Left cardiac atrium (tissue), 4 donors: ENCODE measurements at regions of chr16 and their contacts with region 1.

Region 1: GRCh38 chr16:81035398-81035974 is at the start of gene ATMIN:
- DNase-seq: peak; percentile 89
- ATAC-seq: peak; percentile 96 to 97
- total RNA-seq, gene ATMIN: 19.4 to 21.3 TPM

Region 2: DNA sequence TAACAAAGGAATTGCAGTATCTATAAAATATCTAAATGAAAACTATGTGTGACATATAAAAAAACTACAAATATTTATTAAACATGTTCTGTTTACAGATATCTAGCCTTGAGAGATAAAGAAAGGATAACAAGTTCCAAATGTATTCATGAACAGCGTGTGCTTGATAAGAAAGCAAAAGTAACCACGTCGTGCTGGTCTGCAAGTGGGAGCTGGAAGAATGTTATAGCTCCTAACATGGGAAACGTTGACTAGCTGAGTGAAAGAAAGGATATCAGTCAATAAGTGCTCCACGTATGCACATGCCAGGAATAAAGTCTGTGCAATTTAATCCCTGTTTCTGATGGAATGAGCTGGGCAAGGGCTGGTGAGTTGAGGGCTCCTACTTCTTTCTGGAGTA is 159.9 kb before region 1 on chr16:
- intact Hi-C with region 1: no loop called
- DNase-seq: no peak
- ATAC-seq: no peak

Region 3: DNA sequence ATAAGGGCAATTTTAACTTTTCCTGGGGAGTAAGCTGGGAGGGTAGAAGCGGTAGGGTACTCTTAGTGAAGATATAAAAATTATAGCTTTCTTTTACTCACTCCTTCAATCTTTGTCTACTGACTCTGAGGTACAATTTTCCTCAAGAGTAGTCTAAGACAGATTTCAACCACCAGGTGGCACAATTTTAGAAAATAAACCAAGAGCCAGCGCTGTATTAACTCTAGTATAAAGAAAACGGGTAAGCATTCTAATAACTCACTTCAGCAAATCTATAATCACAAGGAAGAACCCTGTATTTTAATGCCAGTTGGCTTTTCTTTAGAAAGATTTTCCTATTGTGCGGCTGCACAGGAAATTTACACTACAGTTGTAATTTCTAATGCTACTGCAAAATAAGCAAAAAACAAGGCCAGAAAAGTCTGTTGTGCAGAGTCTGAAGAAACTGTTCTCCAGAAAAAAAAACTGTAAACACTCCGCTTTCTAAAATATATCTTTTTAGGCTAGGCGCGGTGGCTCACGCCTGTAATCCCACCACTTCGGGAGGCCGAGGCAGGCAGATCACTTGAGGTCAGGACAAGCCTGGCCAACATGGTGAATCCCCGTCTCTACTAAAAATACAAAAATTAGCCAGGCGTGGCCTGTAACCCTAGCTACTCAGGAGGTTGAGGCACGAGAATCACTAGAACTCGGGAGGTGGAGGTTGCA is 30.7 kb before region 1 on chr16:
- intact Hi-C with region 1: no loop called
- DNase-seq: no peak
- ATAC-seq: no peak

Region 4: DNA sequence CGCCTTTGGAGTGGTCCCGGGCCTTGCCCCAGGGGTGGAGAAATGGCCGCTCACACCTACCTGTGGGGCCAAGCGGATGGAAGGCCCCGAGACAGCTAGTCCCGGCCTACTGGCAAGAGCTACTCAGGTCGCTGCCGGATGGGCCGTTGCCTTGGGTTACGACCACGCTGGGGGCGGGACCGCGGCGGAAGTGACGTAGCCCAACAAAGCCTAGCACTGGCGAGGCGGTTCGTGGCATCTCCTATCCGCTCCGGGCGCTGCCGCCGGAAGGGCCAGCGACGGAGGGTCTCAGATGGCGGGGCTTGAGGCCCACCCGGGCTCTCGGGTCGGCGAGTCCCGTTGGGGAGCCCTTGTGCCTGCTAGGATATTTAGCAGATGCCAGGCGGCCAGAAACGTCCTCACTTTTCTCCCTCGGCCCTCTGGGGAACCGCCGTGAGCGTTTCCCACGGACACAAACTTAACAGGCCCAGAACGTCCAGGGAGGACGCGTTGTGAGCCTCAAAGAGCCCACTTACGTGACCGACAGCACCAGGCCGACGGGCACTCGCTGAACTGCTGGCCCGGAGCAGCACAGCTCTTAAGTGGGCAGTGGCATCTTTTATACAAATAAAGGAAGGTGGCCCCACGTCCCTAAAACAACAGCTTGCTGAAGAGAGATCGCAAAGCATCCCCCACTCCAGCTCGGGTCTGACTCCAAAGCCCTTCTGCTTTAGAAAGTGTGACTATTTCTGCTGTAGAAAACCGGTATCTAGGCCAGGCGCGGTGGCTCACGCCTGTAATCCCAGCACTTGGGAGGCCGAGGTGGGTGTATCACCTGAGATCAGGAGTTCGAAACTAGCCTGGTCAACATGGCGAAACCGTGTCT is 41.8 kb after region 1 on chr16 and contains the start of gene C16orf46:
- intact Hi-C with region 1: no loop called
- DNase-seq: peak; percentile 97
- ATAC-seq: peak; percentile 98 to 99
- total RNA-seq, gene C16orf46: 0.27 to 0.34 TPM

Region 5: DNA sequence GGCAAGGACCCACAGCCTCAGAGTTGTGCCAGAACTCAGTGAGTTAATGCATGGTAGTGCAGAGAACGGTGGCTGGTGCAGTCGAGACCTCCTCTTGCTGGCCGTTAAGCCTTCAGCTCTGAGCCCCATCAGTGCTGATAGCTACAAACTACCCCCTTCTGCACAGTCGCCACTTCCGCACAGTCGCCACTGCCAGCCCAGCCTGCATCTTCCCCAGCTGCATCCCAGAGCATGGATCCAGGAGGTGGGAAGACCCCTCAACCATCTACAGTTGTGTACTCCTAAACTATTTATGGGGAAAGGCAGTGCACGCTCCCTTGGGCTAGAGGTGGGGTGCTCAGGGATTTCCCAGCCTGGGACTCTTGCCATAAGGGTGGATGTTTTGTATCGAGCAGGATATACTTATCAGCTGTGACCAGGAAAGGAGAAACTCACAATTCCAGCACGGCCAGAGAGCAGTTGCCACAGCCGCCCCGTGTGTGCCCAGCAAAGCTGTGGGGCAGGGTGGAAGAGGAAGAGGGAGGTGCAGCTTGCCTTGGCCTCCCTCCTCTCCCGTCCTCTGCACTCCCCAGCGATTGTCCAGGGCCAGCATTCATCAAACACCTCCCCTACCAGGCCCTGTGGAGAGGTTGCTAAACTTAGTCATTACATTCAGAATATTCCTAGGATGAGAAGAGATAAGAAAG is 359.6 kb after region 1 on chr16:
- intact Hi-C with region 1: loop called in 1 of 2 experiments (anchors 10 kb)
- DNase-seq: peak; percentile 75
- ATAC-seq: peak; percentile 78 to 94

Region 6: GRCh38 chr16:81737885-81738786 is 702.6 kb after region 1 on chr16:
- intact Hi-C with region 1: loop called (anchors 5 to 10 kb)
- DNase-seq: peak; percentile 85
- ATAC-seq: peak; percentile 93 to 94